ENCODE measurements at regions of chr4 and their contacts with region 1.

Region 1: GRCh38 chr4:112031712-112032328 is 113.4 kb upstream of the FAM241A start:
- DNase-seq: peak; percentile 26
- H3K4me3 ChIP-seq: no peak overlapping the region
- H3K27ac ChIP-seq: no peak overlapping the region
- H3K4me1 ChIP-seq: no peaks in the 10 kb centered on the region
- H3K27me3 ChIP-seq: no peaks in the 10 kb centered on the region
- CTCF ChIP-seq: peak; percentile 57

Region 2: DNA sequence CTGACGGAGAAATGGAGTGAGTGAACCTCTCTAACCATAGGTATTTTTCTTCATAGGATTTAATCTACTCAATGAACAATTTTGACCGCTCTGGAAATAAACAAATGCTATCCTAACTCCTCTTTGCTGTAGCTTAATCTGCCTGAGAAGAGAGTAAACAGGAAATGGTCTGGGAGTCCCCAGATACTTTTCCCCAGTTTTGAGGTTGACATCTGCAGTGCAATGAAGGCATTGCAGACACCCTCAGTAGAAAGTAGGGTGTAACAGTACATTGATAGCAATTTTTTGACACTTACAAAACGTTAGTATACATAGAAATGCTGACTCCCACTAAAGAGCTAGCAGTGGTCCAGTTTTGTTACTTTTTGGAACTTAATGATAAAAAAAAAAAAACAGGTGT is 382.5 kb before region 1 on chr4:
- intact Hi-C with region 1: loop called (anchors 5 kb)
- DNase-seq: no peak
- H3K4me3 ChIP-seq: no peak overlapping the region
- H3K27ac ChIP-seq: no peak overlapping the region
- H3K4me1 ChIP-seq: no peaks in the 10 kb centered on the region
- H3K27me3 ChIP-seq: no peaks in the 10 kb centered on the region
- CTCF ChIP-seq: no peak

Region 3: DNA sequence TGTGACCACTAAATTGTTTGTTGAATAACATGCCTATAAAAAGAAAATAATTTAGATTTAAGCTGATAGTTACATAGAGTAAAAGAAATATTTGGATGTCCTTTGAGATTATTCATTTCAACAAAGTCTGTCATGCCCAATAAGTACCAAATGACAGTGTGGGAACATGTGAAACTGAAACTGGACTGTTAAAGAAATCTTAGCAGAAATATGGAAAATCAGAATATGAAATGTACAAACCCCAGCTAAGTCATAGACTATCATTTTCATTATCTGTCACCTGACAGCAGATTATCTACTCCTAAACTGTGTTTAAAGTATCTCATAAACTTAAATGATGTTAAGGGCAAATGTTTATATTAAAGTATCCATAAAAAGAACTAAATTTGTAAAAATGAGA is 324.3 kb before region 1 on chr4:
- intact Hi-C with region 1: no loop called
- DNase-seq: no peak
- H3K4me3 ChIP-seq: no peak overlapping the region
- H3K27ac ChIP-seq: no peak overlapping the region
- H3K4me1 ChIP-seq: no peaks in the 10 kb centered on the region
- H3K27me3 ChIP-seq: no peaks in the 10 kb centered on the region
- CTCF ChIP-seq: no peak

Region 4: GRCh38 chr4:111854494-111855087 is 177.2 kb before region 1 on chr4:
- intact Hi-C with region 1: loop called (anchors 10 kb)
- DNase-seq: peak; percentile 20
- H3K4me3 ChIP-seq: no peak overlapping the region
- H3K27ac ChIP-seq: no peak overlapping the region
- H3K4me1 ChIP-seq: no peaks in the 10 kb centered on the region
- H3K27me3 ChIP-seq: no peaks in the 10 kb centered on the region
- CTCF ChIP-seq: peak; percentile 44

Region 5: DNA sequence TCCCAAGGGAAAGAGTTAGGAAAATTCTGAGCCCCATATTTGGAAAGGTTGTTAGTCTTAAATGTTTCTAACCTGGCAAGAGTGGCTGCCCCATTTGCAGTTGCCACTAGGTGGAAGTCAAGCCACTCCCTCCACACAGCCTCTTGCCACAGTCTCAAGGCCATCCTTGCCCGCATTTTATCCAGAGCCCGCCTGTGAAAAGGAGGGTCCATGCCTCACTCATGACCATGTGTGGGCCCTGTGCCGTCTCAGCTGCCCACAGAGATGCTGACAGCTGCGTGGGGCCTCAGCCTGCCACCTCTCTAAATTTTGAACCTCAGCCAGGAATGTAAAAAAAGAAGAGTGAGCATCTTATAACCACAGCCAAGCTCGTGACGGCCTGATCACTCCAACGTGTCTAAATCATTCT is 88.0 kb before region 1 on chr4:
- intact Hi-C with region 1: loop called (anchors 2 kb)
- DNase-seq: peak; percentile 53
- H3K4me3 ChIP-seq: no peak overlapping the region
- H3K27ac ChIP-seq: no peak overlapping the region
- H3K4me1 ChIP-seq: no peaks in the 10 kb centered on the region
- H3K27me3 ChIP-seq: no peaks in the 10 kb centered on the region
- CTCF ChIP-seq: peak; percentile 57

Measured in colonic mucosa (tissue), 4 donors.